HepG2 (cell line): ENCODE measurements at regions of chr11 and their contacts with region 1.

Region 1: GRCh38 chr11:6353367-6353987 is 33.2 kb upstream of the CAVIN3 start:
- DNase-seq: peak; percentile 94
- ATAC-seq: peak; percentile 96
- H3K4me3 ChIP-seq: no peak overlapping the region
- H3K27ac ChIP-seq: no peak overlapping the region
- H3K4me1 ChIP-seq: peaks cover 22% of the 10 kb centered on the region
- H3K27me3 ChIP-seq: no peaks in the 10 kb centered on the region
- CTCF ChIP-seq: peak; percentile 97
- EP300 ChIP-seq: 0 out of 4 replicates have a peak, but pooled peaks of 1 of the 2 experiments have one; percentile 23
- POLR2A ChIP-seq: no peak
- RAD21 ChIP-seq: peak; percentile 90

Region 2: GRCh38 chr11:5476184-5476819 is 877.2 kb before region 1 on chr11:
- CTCF ChIA-PET with region 1: no interaction called
- POLR2A ChIA-PET with region 1: no interaction called
- in situ Hi-C with region 1: no loop called
- intact Hi-C with region 1: loop called (anchors 10 kb)
- DNase-seq: peak; percentile 36
- ATAC-seq: peak; percentile 77
- H3K4me3 ChIP-seq: no peak overlapping the region
- H3K27ac ChIP-seq: no peak overlapping the region
- H3K4me1 ChIP-seq: no peaks in the 10 kb centered on the region
- H3K27me3 ChIP-seq: 0 out of 5 replicates have a peak, but pooled peaks cover 0 to 9% of the 10 kb centered on the region in 2 experiments
- CTCF ChIP-seq: peak; percentile 74
- EP300 ChIP-seq: no peak
- POLR2A ChIP-seq: no peak
- RAD21 ChIP-seq: no peak

Region 3: DNA sequence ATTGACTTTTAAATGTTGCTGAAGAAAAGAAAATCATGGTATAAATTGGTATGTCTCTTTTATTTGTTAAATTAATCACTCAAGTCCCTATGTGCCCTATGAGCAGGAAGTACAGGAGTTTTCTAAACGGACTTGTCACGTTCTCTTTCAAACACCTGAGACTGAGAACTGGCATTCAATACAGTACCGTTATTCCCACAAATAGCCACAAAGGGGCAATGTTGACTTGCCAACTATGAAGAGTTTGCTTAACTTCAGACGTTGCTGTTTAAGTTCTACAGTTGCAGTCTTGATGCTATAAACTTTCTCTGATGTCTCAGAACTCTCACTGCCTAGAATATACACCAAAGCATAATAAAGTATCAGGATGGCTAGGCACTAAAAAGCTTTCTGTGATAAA is 330.5 kb before region 1 on chr11:
- CTCF ChIA-PET with region 1: interaction called, 7 read pairs
- POLR2A ChIA-PET with region 1: no interaction called
- in situ Hi-C with region 1: no loop called
- intact Hi-C with region 1: loop called (anchors 2 kb)
- DNase-seq: peak; percentile 43
- ATAC-seq: peak; percentile 70
- H3K4me3 ChIP-seq: no peak overlapping the region
- H3K27ac ChIP-seq: no peak overlapping the region
- H3K4me1 ChIP-seq: no peaks in the 10 kb centered on the region
- H3K27me3 ChIP-seq: no peaks in the 10 kb centered on the region
- CTCF ChIP-seq: peak; percentile 74
- EP300 ChIP-seq: no peak
- POLR2A ChIP-seq: no peak
- RAD21 ChIP-seq: peak; percentile 33; the same call in 1 of the 2 replicates

Region 4: GRCh38 chr11:6251120-6251733 is 102.2 kb before region 1 on chr11:
- CTCF ChIA-PET with region 1: interaction called, 32 read pairs
- POLR2A ChIA-PET with region 1: no interaction called
- in situ Hi-C with region 1: loop called (anchors 5 kb)
- intact Hi-C with region 1: loop called (anchors 1 kb)
- DNase-seq: peak; percentile 59
- ATAC-seq: peak; percentile 99
- H3K4me3 ChIP-seq: no peak overlapping the region
- H3K27ac ChIP-seq: no peak overlapping the region
- H3K4me1 ChIP-seq: no peaks in the 10 kb centered on the region
- H3K27me3 ChIP-seq: no peaks in the 10 kb centered on the region
- CTCF ChIP-seq: peak; percentile 79
- EP300 ChIP-seq: no peak
- POLR2A ChIP-seq: no peak
- RAD21 ChIP-seq: peak; percentile 64; the same call in 1 of the 2 replicates

Region 5: DNA sequence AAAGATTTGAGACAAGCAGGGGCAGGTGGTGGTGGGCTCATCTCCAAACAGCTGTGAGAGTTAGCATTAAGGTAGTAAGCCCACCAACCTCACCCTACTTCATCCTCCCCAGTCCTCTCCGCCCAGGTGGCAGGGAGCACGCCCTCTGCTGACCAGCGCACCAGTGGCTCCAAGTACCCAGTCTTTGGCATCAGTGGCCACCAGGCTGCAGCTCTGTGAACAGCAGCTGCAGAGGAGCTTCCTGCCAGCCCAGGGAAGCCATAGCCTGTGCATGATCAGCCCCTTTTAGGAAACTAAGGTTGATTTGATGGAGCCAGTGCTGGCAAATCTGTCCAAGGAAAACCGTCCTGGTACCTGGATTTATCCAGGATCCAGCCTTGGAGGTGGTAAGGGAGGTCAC is 54.9 kb before region 1 on chr11:
- CTCF ChIA-PET with region 1: no interaction called
- POLR2A ChIA-PET with region 1: no interaction called
- in situ Hi-C with region 1: no loop called
- intact Hi-C with region 1: loop called (anchors 5 kb)
- DNase-seq: peak; percentile 38
- ATAC-seq: peak; percentile 100
- H3K4me3 ChIP-seq: no peak overlapping the region
- H3K27ac ChIP-seq: no peak overlapping the region
- H3K4me1 ChIP-seq: no peaks in the 10 kb centered on the region
- H3K27me3 ChIP-seq: peaks cover under 1% of the 10 kb centered on the region in 2 experiments; a peak in 3 of 5 replicates
- CTCF ChIP-seq: peak; percentile 84
- EP300 ChIP-seq: no peak
- POLR2A ChIP-seq: no peak
- RAD21 ChIP-seq: no peak

Region 6: GRCh38 chr11:6663794-6664469 is 310.5 kb after region 1 on chr11:
- CTCF ChIA-PET with region 1: no interaction called
- POLR2A ChIA-PET with region 1: no interaction called
- in situ Hi-C with region 1: no loop called
- intact Hi-C with region 1: no loop called
- DNase-seq: no peak
- ATAC-seq: no peak
- H3K4me3 ChIP-seq: no peak overlapping the region
- H3K27ac ChIP-seq: no peak overlapping the region
- H3K4me1 ChIP-seq: no peaks in the 10 kb centered on the region
- H3K27me3 ChIP-seq: peaks cover 0 to 30% of the 10 kb centered on the region in 2 experiments; a peak in 4 of 5 replicates
- CTCF ChIP-seq: no peak
- EP300 ChIP-seq: no peak
- POLR2A ChIP-seq: no peak
- RAD21 ChIP-seq: no peak